ENCODE measurements at regions of chr6 and their contacts with region 1.

Region 1: DNA sequence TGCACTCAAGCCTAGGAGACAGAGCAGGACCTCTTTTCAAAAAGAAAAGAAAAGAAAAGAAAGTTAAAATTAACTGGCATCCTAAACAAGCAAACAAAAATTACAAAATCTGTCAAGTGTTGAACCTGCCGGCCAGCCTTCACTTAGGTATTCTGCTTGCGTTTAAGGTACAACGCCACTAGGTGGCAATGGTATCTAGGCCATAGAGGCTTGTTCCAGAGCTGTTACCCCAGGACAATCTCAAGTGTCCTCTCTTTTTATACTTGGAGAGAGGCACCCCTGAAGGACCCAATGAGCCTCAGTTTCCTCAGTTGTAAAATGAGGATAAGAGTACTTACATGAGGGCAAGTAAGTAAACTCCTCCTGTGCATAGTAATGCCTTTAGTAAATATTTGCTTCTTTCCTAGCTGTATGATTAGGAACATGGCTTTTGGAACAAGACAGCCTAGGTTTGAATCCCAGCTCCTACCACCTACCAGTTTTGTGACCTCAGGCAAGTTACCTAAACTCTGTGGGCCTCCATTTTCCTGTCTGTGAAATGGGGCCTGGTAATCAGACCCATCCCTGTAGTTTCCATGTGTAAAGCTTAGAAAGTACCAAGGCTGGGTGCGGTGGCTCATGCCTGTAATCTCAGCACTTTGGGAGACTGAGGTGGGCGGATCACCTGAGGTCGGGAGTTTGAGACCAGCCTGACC is 5.8 kb upstream of the PACSIN1 start:
- DNase-seq: peak; percentile 33
- H3K4me3 ChIP-seq: no peak overlapping the region
- H3K27ac ChIP-seq: no peak overlapping the region
- H3K4me1 ChIP-seq: peaks cover 0 to 2% (median under 1%) of the 10 kb centered on the region in 6 donors
- H3K27me3 ChIP-seq: peaks cover 0 to 25% (median 9%) of the 10 kb centered on the region in 7 donors
- CTCF ChIP-seq: peak; percentile 47 to 80 (median 64)
- POLR2A ChIP-seq: no peak

Region 2: GRCh38 chr6:34324738-34325444 is 135.2 kb before region 1 on chr6:
- intact Hi-C with region 1: no loop called
- DNase-seq: no peak
- H3K4me3 ChIP-seq: no peak overlapping the region
- H3K27ac ChIP-seq: no peak overlapping the region
- H3K4me1 ChIP-seq: peaks cover 0 to 10% (median 0%) of the 10 kb centered on the region in 6 donors
- H3K27me3 ChIP-seq: no peaks in the 10 kb centered on the region
- CTCF ChIP-seq: no peak
- POLR2A ChIP-seq: no peak

Region 3: DNA sequence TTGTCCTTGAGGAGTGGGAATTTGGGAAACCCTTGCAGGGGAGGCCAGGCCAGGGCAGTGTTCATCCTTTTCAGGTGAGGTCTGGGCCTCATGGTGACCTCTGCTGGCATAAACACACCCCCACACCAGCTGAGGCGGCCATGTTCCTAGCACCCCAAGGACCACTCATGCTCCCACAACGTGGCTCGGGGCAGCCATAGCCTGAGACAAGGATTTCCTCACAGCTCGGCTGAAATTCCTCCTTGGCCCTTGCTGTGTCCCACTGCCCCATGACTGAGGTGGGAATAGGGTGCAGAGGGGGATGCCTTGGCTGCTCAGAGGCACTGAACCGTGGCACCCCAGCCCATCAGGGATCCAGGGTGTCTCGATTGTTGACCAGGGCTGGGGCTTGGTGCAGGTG is 123.4 kb after region 1 on chr6:
- intact Hi-C with region 1: loop called (anchors 10 kb)
- DNase-seq: peak; percentile 66
- H3K4me3 ChIP-seq: no peak overlapping the region
- H3K27ac ChIP-seq: no peak overlapping the region
- H3K4me1 ChIP-seq: no peaks in the 10 kb centered on the region
- H3K27me3 ChIP-seq: no peaks in the 10 kb centered on the region
- CTCF ChIP-seq: peak in 3 of 11 experiments; percentile 11 to 36 (median 34)
- POLR2A ChIP-seq: no peak

Measured in spleen (tissue), 13 donors.